Ovary (tissue), 10 donors: ENCODE measurements at regions of chr4 and their contacts with region 1.

Region 1: GRCh38 chr4:54233277-54233696 is 4.2 kb downstream of the PDGFRA start:
- DNase-seq: peak; percentile 80 to 93 (median 91)
- H3K4me3 ChIP-seq: peak overlapping the region; percentile 68
- H3K27ac ChIP-seq: peak overlapping the region; percentile 81 to 82
- H3K4me1 ChIP-seq: peaks cover 6% of the 10 kb centered on the region
- H3K27me3 ChIP-seq: no peaks in the 10 kb centered on the region
- CTCF ChIP-seq: peak; percentile 76 to 88 (median 80)
- EP300 ChIP-seq: no peak
- POLR2A ChIP-seq: no peak

Region 2: DNA sequence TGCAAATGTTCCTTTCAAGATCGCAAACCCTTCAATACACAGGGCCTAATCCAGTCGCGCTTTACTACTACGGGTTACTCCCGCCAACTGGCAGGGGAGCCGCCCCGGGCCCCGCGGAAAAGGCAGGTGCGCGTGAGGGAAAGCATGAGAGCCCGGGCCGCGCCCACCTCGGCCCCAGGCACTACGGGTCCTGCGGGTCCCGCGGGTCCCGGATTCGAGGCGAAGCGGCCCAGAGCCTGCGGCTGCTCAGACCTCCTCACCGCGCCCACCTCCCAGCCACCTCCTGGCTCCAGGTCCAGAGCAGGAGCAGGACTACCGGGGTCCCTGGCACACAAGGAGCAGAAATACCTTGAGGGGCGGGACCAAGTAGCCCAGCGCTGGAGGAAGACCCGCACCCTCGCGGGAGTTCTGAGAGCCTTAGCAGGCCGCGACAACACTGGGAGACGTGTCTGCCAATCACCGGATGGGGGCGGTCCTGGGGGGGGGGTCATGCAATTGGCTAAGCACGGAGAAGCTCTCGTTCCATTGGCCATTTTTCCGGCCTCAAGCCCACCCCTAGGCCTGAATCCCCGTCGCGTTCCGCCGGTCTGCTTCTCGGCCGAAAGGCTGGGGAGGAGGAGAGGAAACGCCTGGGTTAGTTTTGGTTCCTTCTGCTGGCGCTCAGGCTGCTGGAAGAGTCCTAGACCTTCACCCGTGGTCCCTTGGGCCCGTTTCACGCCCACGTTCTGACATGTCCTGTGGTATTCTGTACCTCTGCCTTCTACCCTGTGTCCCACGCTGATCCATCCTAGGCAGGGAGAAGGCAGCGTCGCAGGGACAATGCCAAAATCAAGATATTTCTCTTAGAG is 1511.1 kb before region 1 on chr4:
- intact Hi-C with region 1: loop called in 1 of 4 experiments (anchors 10 kb)
- DNase-seq: peak; percentile 92 to 94 (median 93)
- H3K4me3 ChIP-seq: peak overlapping the region; percentile 61
- H3K27ac ChIP-seq: peak overlapping the region; percentile 82 to 85
- H3K4me1 ChIP-seq: no peaks in the 10 kb centered on the region
- H3K27me3 ChIP-seq: no peaks in the 10 kb centered on the region
- CTCF ChIP-seq: no peak
- EP300 ChIP-seq: no peak
- POLR2A ChIP-seq: peak; percentile 45

Region 3: DNA sequence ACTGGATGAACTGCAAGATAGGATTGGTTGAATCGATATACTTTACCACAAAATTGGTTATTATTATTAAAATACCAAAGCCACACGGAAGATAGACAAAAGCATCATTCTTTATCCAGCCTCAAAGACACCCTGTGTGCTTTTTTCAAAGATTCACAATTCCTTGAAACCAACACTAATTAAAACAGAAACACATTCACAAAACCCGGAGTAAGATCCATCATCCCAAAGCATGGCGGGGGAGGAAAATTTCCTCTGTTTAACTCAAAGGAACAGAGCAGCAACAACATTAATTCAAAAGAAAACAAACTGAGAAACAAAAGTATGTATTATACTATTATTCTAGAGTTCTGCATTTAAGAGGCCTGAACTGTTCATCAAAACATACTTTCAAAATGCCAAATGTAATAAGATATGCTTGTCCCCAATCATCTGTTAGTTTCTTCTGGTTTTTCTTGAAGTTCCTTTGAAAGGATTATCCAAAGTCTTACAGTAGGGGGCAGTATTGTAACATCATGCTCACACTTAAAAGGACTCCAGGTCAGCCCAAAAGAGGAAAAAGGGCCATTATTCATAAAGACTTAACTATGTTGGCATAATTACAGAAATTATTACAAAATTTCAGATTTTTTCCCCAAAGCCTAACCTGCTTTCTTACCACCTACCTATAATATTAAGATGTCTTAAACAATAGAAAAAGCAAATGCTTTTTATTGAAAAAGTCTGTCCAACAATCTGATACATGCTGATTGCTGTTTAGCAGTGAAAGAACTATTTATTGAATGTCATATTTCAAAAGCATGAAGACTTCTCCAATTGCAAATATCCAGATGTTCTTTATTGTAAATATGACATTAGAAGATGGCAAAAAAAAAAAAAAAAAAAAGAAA is 1036.2 kb before region 1 on chr4:
- intact Hi-C with region 1: loop called in 3 of 4 experiments (anchors 5 to 10 kb)
- DNase-seq: no peak
- H3K4me3 ChIP-seq: no peak overlapping the region
- H3K27ac ChIP-seq: no peak overlapping the region
- H3K4me1 ChIP-seq: no peaks in the 10 kb centered on the region
- H3K27me3 ChIP-seq: no peaks in the 10 kb centered on the region
- CTCF ChIP-seq: peak; percentile 50 to 83 (median 62)
- EP300 ChIP-seq: no peak
- POLR2A ChIP-seq: no peak

Region 4: DNA sequence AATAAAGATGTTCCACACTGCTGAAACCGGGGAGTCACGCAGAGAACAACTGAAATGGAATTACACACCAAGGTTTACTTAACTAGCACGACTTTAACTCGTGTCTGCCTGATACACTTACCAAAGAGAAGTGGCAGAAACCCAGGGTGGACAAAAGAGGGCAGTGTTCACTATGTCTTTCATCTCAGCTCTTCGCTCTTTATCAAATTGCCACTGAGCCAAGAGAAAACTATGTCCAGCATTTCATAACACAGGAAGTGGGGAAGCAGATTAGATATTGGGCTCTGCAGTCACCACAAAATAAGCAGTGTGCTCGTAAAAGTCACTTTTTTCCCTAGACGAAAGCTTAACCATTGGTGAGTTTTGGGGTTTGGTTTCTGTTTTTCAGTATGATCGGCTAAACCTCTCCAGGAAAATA is 324.6 kb before region 1 on chr4:
- intact Hi-C with region 1: loop called (anchors 5 to 10 kb)
- DNase-seq: peak in 3 of 5 donors; percentile 39 to 67 (median 56)
- H3K4me3 ChIP-seq: no peak overlapping the region
- H3K27ac ChIP-seq: peak overlapping the region in 1 of 2 donors; percentile 67
- H3K4me1 ChIP-seq: peaks cover 6% of the 10 kb centered on the region
- H3K27me3 ChIP-seq: no peaks in the 10 kb centered on the region
- CTCF ChIP-seq: peak; percentile 52 to 74 (median 72)
- EP300 ChIP-seq: no peak
- POLR2A ChIP-seq: no peak